Left cardiac atrium (tissue), 4 donors: ENCODE measurements at regions of chr2 and their contacts with region 1.

Region 1: GRCh38 chr2:9555297-9556141 is at the start of gene ADAM17:
- DNase-seq: peak; percentile 98
- ATAC-seq: peak; percentile 97 to 98
- total RNA-seq, gene ADAM17: 14.1 to 22.6 TPM

Region 2: DNA sequence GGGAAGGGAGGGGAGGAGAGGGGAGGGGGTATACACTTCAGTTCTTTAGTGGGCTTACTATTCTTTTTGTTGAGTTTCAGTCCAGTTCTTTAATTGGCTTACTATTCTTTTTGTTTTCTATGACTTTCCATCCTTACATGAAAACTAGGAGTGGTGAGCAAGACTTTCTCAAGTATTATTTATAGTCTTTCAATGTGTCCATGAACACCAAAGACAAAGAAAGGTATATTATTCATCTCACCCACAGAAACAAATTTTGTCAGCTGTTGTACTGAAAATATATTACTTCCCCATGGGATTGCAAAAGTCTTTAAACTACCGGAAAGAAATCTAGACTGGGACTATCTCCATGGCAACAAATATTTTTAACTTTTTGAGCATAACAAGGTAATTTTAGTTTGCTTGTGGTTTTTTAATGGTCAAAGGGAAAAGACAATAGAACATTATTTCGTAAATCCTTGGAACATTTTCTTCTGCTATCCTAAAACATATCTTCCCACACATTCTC is 17.5 kb before region 1 on chr2:
- intact Hi-C with region 1: no loop called
- DNase-seq: no peak
- ATAC-seq: peak; percentile 34 to 75

Region 3: GRCh38 chr2:9630749-9631483 is 75.4 kb after region 1 on chr2 and contains the start of gene YWHAQ:
- intact Hi-C with region 1: loop called in 1 of 2 experiments (anchors 5 kb)
- DNase-seq: peak; percentile 99
- ATAC-seq: peak; percentile 98
- total RNA-seq, gene YWHAQ: 118 to 207 TPM

Region 4: GRCh38 chr2:9693211-9693520 is 137.6 kb after region 1 on chr2:
- intact Hi-C with region 1: loop called in 1 of 2 experiments (anchors 10 kb)
- DNase-seq: peak; percentile 67
- ATAC-seq: peak; percentile 95 to 97